ENCODE measurements at regions of chr1 and their contacts with region 1.

Region 1: GRCh38 chr1:158035976-158036583 is 42.6 kb downstream of the KIRREL1 start:
- DNase-seq: peak; percentile 68
- H3K4me3 Mint-ChIP-seq: no peak overlapping the region
- H3K27ac Mint-ChIP-seq: peak overlapping the region; percentile 77
- H3K4me1 Mint-ChIP-seq: peaks cover 45% of the 10 kb centered on the region
- H3K27me3 Mint-ChIP-seq: no peaks in the 10 kb centered on the region
- CTCF ChIP-seq: peak; percentile 92

Region 2: GRCh38 chr1:158002022-158002630 is 34.0 kb before region 1 on chr1:
- CTCF ChIA-PET with region 1: interaction called, 603 read pairs
- POLR2A ChIA-PET with region 1: interaction called, 6 read pairs
- intact Hi-C with region 1: no loop called
- DNase-seq: peak; percentile 57
- H3K4me3 Mint-ChIP-seq: no peak overlapping the region
- H3K27ac Mint-ChIP-seq: peak overlapping the region; percentile 79
- H3K4me1 Mint-ChIP-seq: peaks cover 79% of the 10 kb centered on the region
- H3K27me3 Mint-ChIP-seq: no peaks in the 10 kb centered on the region
- CTCF ChIP-seq: no peak

Region 3: GRCh38 chr1:158019171-158019868 is 16.8 kb before region 1 on chr1:
- CTCF ChIA-PET with region 1: interaction called, 119 read pairs
- POLR2A ChIA-PET with region 1: interaction called, 79 read pairs
- intact Hi-C with region 1: no loop called
- DNase-seq: peak; percentile 92
- H3K4me3 Mint-ChIP-seq: peak overlapping the region; percentile 20
- H3K27ac Mint-ChIP-seq: peak overlapping the region; percentile 86
- H3K4me1 Mint-ChIP-seq: peaks cover 74% of the 10 kb centered on the region
- H3K27me3 Mint-ChIP-seq: no peaks in the 10 kb centered on the region
- CTCF ChIP-seq: no peak

Region 4: GRCh38 chr1:158075078-158075477 is 39.0 kb after region 1 on chr1:
- CTCF ChIA-PET with region 1: interaction called, 25 read pairs
- POLR2A ChIA-PET with region 1: no interaction called
- intact Hi-C with region 1: no loop called
- DNase-seq: no peak
- H3K4me3 Mint-ChIP-seq: no peak overlapping the region
- H3K27ac Mint-ChIP-seq: peak overlapping the region; percentile 1
- H3K4me1 Mint-ChIP-seq: peaks cover 16% of the 10 kb centered on the region
- H3K27me3 Mint-ChIP-seq: no peaks in the 10 kb centered on the region
- CTCF ChIP-seq: no peak

Region 5: GRCh38 chr1:158095737-158096335 is 59.8 kb after region 1 on chr1:
- CTCF ChIA-PET with region 1: interaction called, 14 read pairs
- POLR2A ChIA-PET with region 1: no interaction called
- intact Hi-C with region 1: no loop called
- DNase-seq: peak; percentile 56
- H3K4me3 Mint-ChIP-seq: no peak overlapping the region
- H3K27ac Mint-ChIP-seq: peak overlapping the region; percentile 10
- H3K4me1 Mint-ChIP-seq: peaks cover 9% of the 10 kb centered on the region
- H3K27me3 Mint-ChIP-seq: no peaks in the 10 kb centered on the region
- CTCF ChIP-seq: peak; percentile 67

Region 6: DNA sequence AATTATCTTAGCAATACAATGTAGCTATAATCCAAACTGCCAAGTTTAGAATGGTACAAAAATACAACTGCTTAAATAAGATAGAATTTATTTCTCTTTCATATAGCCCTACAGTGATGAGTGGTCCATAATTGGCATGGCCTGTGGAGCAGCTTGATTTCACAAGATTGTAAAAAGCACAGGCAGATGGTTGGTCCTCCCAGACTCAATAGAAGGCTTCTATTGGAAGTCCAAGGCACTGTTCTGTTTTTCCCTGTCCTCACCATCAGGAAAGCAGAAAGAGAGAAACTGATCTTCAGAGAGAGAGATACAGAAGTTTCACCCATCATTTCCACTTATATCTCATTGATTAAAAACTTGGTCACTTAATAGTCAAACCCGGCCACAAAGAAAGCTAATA is 536.1 kb after region 1 on chr1:
- CTCF ChIA-PET with region 1: no interaction called
- POLR2A ChIA-PET with region 1: no interaction called
- intact Hi-C with region 1: no loop called
- DNase-seq: no peak
- H3K4me3 Mint-ChIP-seq: no peak overlapping the region
- H3K27ac Mint-ChIP-seq: no peak overlapping the region
- H3K4me1 Mint-ChIP-seq: no peaks in the 10 kb centered on the region
- H3K27me3 Mint-ChIP-seq: peaks cover 79% of the 10 kb centered on the region
- CTCF ChIP-seq: no peak